GM10248 (cell line): ENCODE measurements at regions of chr10 and their contacts with region 1.

Region 1: DNA sequence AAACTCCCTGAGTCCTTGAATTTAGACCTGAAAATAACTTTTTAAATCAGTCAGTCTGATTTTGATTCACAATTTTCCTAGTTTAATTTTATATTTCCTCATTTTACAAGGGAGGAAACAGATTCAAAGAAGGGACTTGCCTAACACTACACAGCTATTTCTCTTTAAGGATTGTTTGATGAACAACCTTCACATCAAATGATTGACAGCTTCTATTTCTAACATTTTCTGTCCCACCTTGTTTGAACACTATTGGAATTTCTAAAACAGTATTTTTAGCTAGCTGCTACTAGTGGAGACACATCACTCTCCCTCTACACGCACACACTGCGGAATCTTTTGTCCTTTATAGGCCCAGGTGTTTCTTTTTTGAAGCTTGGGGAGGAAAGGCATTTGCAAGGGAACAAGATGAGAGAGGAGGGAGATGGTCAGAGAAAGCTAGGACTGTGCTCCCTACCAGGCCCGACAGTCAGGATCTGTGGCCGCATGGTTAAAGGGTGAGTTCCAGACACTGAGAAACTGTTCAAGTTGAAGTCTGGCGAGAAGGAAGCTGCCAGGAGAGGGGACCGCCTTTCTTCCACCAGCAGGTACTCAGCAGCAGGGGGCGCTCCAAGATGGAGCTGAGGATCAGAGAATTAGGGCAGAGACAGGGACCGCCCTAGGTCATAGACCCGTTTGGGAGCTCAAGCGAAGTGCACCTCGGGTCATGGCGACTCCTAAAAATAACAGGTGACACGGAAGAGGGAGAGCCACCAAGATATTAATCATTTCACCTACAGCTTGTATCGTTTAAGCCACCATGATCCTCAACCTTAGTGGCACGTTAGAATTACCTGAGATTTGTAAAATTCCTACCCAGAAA is 49.7 kb downstream of the DNAJC12 start:
- DNase-seq: peak; percentile 77
- CTCF ChIP-seq: peak; percentile 84

Region 2: GRCh38 chr10:67697724-67698131 is 90.5 kb before region 1 on chr10:
- CTCF ChIA-PET with region 1: interaction called, 30 read pairs
- POLR2A ChIA-PET with region 1: no interaction called
- DNase-seq: peak; percentile 44
- CTCF ChIP-seq: peak; percentile 54

Region 3: DNA sequence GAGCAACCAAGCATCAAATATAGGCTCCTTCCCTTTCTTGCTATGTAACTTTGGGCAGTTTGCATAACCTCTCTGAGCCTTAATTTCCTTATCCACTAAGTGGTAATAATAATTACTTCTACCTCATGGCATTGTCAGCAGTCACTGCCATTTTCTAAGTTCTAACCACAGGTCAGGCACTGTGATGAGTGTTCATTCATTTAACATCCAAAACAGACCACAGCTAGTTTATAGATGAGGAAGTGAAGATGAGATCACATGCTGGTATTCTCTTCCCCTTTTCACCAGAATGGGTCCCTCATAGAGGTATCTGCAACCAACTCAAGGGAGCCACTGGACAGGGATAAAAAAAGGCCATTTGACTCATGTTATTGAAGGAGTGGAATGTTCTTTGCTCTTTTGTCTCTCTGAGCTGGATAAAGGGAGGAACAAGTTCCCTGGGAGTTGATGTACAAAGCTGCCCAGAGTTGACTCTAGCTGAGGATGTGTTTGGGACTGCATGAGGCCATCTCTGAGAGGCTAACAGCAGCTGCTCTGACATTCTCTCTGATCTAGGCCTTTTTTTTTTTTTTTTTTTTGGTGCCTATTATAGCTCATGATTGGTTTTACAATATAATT is 15.3 kb before region 1 on chr10:
- CTCF ChIA-PET with region 1: interaction called, 63 read pairs
- POLR2A ChIA-PET with region 1: no interaction called
- DNase-seq: peak; percentile 71
- CTCF ChIP-seq: no peak

Region 4: DNA sequence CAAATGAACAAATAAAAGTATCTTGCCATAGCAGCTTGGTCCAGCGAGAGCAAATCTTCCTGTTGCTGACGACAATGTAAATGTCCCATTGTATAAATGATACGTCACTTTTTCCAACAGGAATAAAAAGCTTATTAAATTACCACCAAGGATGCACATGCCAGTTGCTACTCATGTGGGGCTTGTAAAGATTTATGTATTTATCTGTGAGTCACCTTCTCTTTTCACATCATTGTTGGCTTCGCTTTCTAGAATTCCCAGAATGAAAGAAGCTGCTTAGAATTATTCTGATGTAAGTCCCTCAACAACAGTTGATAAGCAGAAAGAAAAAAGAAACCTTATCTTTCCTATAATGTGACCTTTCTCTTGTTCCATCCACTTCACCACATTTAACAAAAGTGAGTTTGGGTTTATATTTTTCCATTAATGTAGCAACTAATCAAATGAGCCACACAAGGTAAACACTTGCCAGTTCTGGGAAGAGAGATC is 27.4 kb after region 1 on chr10:
- CTCF ChIA-PET with region 1: interaction called, 10 read pairs
- POLR2A ChIA-PET with region 1: no interaction called
- DNase-seq: no peak
- CTCF ChIP-seq: no peak

Region 5: GRCh38 chr10:68151453-68151852 is 363.2 kb after region 1 on chr10:
- CTCF ChIA-PET with region 1: interaction called, 89 read pairs
- POLR2A ChIA-PET with region 1: no interaction called
- DNase-seq: no peak
- CTCF ChIP-seq: no peak

Region 6: DNA sequence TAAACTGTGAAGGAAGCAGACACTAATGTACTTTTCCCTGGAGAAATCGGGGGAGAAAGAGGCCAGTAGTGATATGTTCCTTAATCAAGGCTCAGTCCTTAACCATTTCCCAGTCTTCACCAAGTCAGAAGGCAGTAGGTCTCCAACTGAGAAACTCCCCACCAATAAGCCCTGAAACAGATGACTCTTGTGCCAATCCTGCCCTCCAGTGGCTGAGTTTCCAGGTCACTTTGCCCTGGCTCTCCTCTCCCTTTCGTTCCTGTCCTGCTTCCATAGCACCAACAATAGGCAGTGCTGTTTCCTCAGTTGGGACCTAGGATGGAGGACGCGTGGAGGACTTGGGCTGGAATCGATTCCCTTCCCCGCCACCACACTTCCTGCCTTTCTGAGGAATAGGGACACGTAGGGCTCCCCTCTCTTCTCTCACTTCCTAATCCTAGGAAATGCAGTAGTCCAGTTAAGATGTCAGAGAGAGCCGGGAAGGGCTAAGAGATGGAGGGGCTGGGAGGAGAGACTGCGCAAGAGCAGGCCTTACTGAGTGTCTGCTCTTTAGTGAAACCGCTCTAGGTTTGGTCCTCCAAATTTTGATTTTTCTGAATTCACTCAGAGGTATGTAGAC is 420.3 kb after region 1 on chr10:
- CTCF ChIA-PET with region 1: interaction called, 30 read pairs
- POLR2A ChIA-PET with region 1: no interaction called
- DNase-seq: peak; percentile 45
- CTCF ChIP-seq: peak; percentile 57